GM10248 (cell line): ENCODE measurements at regions of chr2 and their contacts with region 1.

Region 1: GRCh38 chr2:186498838-186499237 is 12.8 kb downstream of the ZC3H15 start:
- DNase-seq: no peak
- CTCF ChIP-seq: no peak

Region 2: DNA sequence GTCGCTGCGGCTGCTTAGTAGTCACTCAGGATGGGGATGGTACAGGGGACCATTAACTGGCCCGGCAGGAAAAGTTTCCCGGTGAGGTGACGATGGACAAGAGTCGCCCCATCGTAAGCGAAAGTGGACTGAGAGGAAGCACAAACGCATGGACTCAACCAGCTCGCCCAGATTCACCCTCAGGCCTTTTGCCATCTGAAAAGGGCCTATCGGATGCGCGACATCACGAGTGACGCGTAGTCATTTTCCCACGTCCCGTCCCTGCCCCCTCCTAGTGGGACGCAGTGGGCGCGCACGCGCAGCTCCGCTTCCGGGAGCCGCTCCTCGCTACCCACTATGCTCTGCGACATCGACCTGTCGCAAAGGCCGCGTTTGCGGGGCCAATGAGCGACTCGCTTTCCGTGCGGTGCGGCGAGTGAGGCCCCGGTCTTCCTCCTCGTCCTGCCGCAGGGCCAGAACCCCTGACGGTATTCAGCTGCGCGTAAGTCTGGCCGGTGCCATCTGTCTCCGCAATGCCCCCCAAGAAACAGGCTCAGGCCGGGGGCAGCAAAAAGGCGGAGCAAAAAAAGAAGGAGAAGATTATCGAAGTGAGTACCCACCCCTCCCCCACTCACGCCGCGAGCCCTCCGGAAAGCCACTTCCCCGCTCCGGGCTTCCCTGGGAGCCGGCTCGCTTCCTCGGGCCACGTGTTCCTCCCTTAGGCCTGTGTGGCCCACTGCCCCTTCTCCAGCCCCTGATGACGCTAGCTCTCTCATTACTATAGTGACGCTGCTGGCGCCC is 12.8 kb before region 1 on chr2 and contains the start of gene ZC3H15:
- CTCF ChIA-PET with region 1: interaction called, 39 read pairs
- POLR2A ChIA-PET with region 1: no interaction called
- DNase-seq: peak; percentile 95
- CTCF ChIP-seq: no peak

Region 3: GRCh38 chr2:186575302-186575701 is 76.5 kb after region 1 on chr2:
- CTCF ChIA-PET with region 1: no interaction called
- POLR2A ChIA-PET with region 1: no interaction called
- DNase-seq: no peak
- CTCF ChIP-seq: no peak